CD4-positive, alpha-beta memory T cell (primary cell): ENCODE measurements at regions of chr5 and their contacts with region 1.

Region 1: DNA sequence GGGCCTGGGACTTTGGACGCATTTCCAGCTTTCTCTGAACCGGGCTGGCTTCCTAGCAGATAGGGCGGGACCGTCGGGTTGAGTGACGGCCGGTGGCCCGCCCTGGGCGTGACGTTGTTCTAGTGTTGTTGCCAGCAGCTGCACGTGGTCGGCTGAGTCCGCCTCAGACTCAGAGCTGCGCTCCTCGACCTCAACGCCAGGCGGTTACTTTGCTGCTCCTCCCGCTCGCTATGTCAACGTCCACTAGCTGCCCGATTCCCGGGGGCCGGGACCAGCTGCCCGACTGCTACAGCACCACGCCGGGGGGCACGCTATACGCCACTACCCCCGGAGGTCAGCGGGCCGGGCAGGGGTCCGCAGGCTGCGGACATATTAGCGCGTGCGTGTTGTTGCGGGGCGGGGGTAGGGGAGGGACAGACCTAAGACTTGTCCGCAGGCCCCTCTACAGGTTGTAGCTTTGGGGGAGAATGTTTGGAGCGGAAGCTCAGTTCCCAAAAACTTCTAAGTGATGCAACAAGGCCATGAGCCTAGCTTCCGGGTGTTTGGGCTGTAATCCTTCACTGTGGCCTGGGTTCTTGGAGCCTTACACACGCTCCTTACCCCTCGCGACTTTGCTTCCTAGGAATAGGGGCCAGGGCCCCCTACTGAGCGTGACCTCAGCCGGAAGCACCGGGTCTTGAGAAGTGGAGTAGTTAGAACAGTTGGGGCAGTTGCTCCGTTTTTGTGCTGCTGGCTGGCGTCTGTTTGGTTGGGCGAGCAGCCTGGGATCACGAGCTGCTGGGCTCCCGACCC is at the start of gene EIF4EBP3:
- DNase-seq: peak; percentile 84 to 92 (median 87)
- H3K4me3 ChIP-seq: peak within 1 kb of the TSS; percentile 57 to 76
- H3K4me3 Mint-ChIP-seq: peak within 1 kb of the TSS; percentile 85 to 93 (median 89)
- H3K27ac ChIP-seq: peak within 1 kb of the TSS; percentile 77
- H3K27ac Mint-ChIP-seq: peak within 1 kb of the TSS; percentile 91 to 97 (median 97)
- H3K4me1 ChIP-seq: peaks cover 30% of the 10 kb centered on the region
- H3K4me1 Mint-ChIP-seq: peaks cover 19 to 50% (median 26%) of the 10 kb centered on the region in 4 donors
- H3K27me3 ChIP-seq: no peaks in the 10 kb centered on the region
- H3K27me3 Mint-ChIP-seq: no peaks in the 10 kb centered on the region
- total RNA-seq, gene EIF4EBP3: 15.3 to 18.8 TPM

Region 2: GRCh38 chr5:140632150-140633020 is 84.7 kb after region 1 on chr5:
- CTCF ChIA-PET with region 1: interaction called, 49 read pairs
- POLR2A ChIA-PET with region 1: interaction called, 23 read pairs
- intact Hi-C with region 1: no loop called
- DNase-seq: peak; percentile 50 to 66 (median 55)
- H3K4me3 ChIP-seq: peak overlapping the region; percentile 61 to 73
- H3K4me3 Mint-ChIP-seq: peak overlapping the region; percentile 90 to 96 (median 90)
- H3K27ac ChIP-seq: peak overlapping the region; percentile 41
- H3K27ac Mint-ChIP-seq: peak overlapping the region; percentile 68 to 93 (median 89)
- H3K4me1 ChIP-seq: peaks cover 13% of the 10 kb centered on the region
- H3K4me1 Mint-ChIP-seq: peaks cover 10 to 30% (median 20%) of the 10 kb centered on the region in 4 donors
- H3K27me3 ChIP-seq: no peaks in the 10 kb centered on the region
- H3K27me3 Mint-ChIP-seq: peaks cover 0 to 2% of the 10 kb centered on the region in 2 donors